ENCODE measurements at regions of chr1 and their contacts with region 1.

Region 1: GRCh38 chr1:70205434-70206118 is at the start of gene LRRC40:
- DNase-seq: peak; percentile 96
- H3K4me3 ChIP-seq: peak within 1 kb of the TSS; percentile 76
- H3K27ac ChIP-seq: peak within 1 kb of the TSS; percentile 81
- H3K4me1 ChIP-seq: peaks cover 52% of the 10 kb centered on the region
- CTCF ChIP-seq: peak; percentile 52
- total RNA-seq, gene LRRC40: 20.1 and 20.3 TPM in 2 replicates

Region 2: GRCh38 chr1:69643266-69643665 is 562.3 kb before region 1 on chr1:
- CTCF ChIA-PET with region 1: no interaction called
- POLR2A ChIA-PET with region 1: no interaction called
- intact Hi-C with region 1: no loop called
- DNase-seq: no peak
- H3K4me3 ChIP-seq: no peak overlapping the region
- H3K27ac ChIP-seq: no peak overlapping the region
- H3K4me1 ChIP-seq: no peaks in the 10 kb centered on the region
- CTCF ChIP-seq: no peak

Region 3: DNA sequence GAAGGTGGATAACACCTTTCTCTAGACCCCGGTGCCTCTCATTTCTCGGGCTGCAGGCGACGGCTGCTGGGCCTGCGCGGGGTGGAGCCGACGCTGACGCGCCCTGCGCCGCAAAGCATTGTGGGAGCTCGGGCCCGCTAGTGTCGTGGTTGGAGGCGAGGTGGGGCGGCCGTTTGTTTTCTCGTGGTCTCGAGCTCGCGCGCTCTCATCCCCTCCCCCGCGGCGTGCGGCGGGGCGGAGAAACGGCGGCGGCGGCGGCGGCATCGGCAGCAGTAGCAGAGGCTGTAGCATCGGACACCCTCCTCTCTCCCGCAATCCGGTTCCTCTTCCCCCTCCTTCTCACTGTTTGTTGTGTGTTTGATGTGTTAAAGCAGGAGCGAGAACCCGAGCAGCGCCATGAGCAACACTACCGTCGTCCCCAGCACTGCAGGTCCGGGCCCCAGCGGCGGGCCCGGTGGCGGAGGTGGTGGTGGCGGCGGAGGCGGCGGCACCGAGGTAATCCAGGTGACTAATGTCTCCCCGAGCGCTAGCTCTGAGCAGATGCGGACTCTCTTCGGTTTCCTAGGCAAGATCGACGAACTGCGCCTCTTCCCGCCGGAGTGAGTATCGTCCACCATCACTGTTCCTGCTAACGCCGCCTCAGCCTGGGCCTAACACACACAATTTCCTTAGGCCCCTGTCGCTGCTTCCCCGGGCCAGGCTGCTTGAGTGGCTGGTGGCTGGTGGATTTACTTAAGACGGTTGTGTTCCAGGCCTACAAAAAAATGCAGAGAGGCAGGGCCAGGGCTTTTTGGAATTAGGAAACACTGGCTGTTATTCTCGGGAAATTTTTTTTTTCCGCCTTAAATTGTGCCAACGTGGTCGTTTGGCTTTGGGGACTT is 15.9 kb after region 1 on chr1 and contains the start of gene SRSF11:
- CTCF ChIA-PET with region 1: interaction called, 3 read pairs
- POLR2A ChIA-PET with region 1: interaction called, 92 read pairs
- intact Hi-C with region 1: loop called (anchors 1 kb)
- DNase-seq: peak; percentile 95
- H3K4me3 ChIP-seq: peak within 1 kb of the TSS; percentile 90
- H3K27ac ChIP-seq: peak within 1 kb of the TSS; percentile 92
- H3K4me1 ChIP-seq: peaks cover 53% of the 10 kb centered on the region
- CTCF ChIP-seq: peak; percentile 33; the same call in 1 of the 2 replicates
- total RNA-seq, gene SRSF11: 165 and 198 TPM in 2 replicates

Region 4: GRCh38 chr1:70247768-70248167 is 42.2 kb after region 1 on chr1:
- CTCF ChIA-PET with region 1: no interaction called
- POLR2A ChIA-PET with region 1: no interaction called
- intact Hi-C with region 1: no loop called
- DNase-seq: no peak
- H3K4me3 ChIP-seq: no peak overlapping the region
- H3K27ac ChIP-seq: no peak overlapping the region
- H3K4me1 ChIP-seq: no peaks in the 10 kb centered on the region
- CTCF ChIP-seq: no peak

Region 5: GRCh38 chr1:70354332-70355110 is 148.9 kb after region 1 on chr1 and contains the start of gene ANKRD13C:
- CTCF ChIA-PET with region 1: no interaction called
- POLR2A ChIA-PET with region 1: interaction called, 3 read pairs
- intact Hi-C with region 1: loop called (anchors 5 kb)
- DNase-seq: peak; percentile 96
- H3K4me3 ChIP-seq: peak within 1 kb of the TSS; percentile 74
- H3K27ac ChIP-seq: peak within 1 kb of the TSS; percentile 76
- H3K4me1 ChIP-seq: peaks cover 16% of the 10 kb centered on the region
- CTCF ChIP-seq: no peak
- total RNA-seq, gene ANKRD13C: 22.1 and 25.0 TPM in 2 replicates

Region 6: DNA sequence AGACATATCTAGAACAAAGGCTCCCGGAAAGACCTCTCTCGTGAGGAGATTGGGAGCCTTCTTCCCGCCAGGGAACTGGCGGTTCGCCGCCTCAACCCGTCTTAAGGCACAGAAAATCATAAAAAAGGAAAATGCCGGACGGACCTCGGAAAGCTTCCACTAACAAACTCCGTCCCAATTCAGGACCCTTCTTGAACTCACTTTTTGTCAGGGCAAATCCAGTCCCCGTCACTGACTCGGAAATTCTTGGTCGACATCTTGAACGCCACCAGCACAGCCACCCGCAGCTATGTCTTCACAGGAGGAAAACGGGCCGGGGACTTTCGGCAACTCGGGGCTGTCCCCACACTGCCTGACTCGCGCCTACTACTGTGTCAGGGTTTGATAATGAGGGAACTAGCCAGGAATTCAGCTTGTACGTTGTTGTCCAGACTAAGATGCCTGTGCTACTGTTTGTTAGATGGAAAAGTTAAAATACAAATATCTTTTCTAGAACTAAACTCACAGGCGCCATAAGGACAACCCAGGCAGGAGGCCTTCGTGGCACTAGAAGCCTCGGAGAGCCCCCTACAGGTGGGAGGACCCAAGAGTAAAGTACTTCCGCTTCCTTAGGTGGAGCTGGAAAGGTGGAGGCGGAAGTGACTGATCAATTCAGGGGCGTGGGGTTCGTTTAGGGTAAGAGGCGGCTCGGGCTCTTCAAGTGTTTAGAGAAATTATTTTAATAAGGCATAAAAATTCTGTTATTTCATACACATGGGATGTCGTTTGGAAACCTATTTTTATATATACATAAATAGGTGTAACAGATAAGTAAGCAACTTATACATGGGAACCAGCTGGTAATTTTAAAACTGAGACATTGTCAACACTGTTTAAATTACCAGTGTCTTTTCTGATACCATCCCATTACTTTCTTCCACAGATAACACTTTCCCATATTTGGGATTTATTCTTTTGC is 875.4 kb after region 1 on chr1 and contains the start of gene ZRANB2:
- CTCF ChIA-PET with region 1: no interaction called
- POLR2A ChIA-PET with region 1: interaction called, 3 read pairs
- intact Hi-C with region 1: loop called (anchors 1 kb)
- DNase-seq: peak; percentile 98
- H3K4me3 ChIP-seq: peak within 1 kb of the TSS; percentile 92
- H3K27ac ChIP-seq: peak within 1 kb of the TSS; percentile 62
- H3K4me1 ChIP-seq: peaks cover 19% of the 10 kb centered on the region
- CTCF ChIP-seq: peak; percentile 82
- total RNA-seq, gene ZRANB2: 75.9 and 82.1 TPM in 2 replicates

Measured in OCI-LY7 (cell line).